ENCODE measurements at regions of chr9 and their contacts with region 1.

Region 1: GRCh38 chr9:18359335-18359734 is 114.6 kb upstream of the ADAMTSL1 start:
- DNase-seq: peak; percentile 92
- H3K4me3 ChIP-seq: peak overlapping the region in 1 of 3 experiments; percentile 59
- H3K27ac ChIP-seq: peak overlapping the region; percentile 100
- H3K4me1 ChIP-seq: peaks cover 31% of the 10 kb centered on the region
- H3K27me3 ChIP-seq: no peaks in the 10 kb centered on the region
- CTCF ChIP-seq: no peak
- POLR2A ChIP-seq: no peak

Region 2: GRCh38 chr9:18238254-18238653 is 121.1 kb before region 1 on chr9:
- CTCF ChIA-PET with region 1: no interaction called
- POLR2A ChIA-PET with region 1: no interaction called
- dilution Hi-C with region 1: no loop called
- intact Hi-C with region 1: loop called (anchors 1 kb)
- DNase-seq: peak; percentile 97
- H3K4me3 ChIP-seq: peak overlapping the region in 1 of 3 experiments; percentile 27
- H3K27ac ChIP-seq: peak overlapping the region; percentile 93
- H3K4me1 ChIP-seq: peaks cover 43% of the 10 kb centered on the region
- H3K27me3 ChIP-seq: no peaks in the 10 kb centered on the region
- CTCF ChIP-seq: no peak
- POLR2A ChIP-seq: no peak

Region 3: GRCh38 chr9:18274693-18275092 is 84.6 kb before region 1 on chr9:
- CTCF ChIA-PET with region 1: no interaction called
- POLR2A ChIA-PET with region 1: no interaction called
- dilution Hi-C with region 1: no loop called
- intact Hi-C with region 1: no loop called
- DNase-seq: peak; percentile 89
- H3K4me3 ChIP-seq: no peak overlapping the region
- H3K27ac ChIP-seq: peak overlapping the region; percentile 11
- H3K4me1 ChIP-seq: peaks cover 10% of the 10 kb centered on the region
- H3K27me3 ChIP-seq: no peaks in the 10 kb centered on the region
- CTCF ChIP-seq: no peak
- POLR2A ChIP-seq: no peak

Region 4: DNA sequence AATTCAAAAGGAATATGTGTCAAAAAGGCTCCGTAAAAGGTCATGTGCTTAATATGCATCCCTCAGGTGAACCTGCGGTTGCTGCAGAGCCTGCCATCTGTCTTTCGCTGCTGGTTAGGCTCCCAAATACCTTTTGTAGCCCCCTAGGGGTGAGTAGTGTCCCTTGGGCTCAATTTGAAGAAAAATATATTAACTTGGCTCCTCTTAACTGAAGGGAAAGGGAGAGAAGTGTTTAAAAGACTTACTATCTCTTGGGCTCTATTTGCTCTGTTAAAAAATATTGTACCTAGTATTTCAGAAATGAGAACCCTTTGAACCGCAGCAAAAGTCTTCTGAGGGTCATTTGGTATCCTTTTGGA is 61.8 kb before region 1 on chr9:
- CTCF ChIA-PET with region 1: no interaction called
- POLR2A ChIA-PET with region 1: no interaction called
- dilution Hi-C with region 1: no loop called
- intact Hi-C with region 1: no loop called
- DNase-seq: no peak
- H3K4me3 ChIP-seq: no peak overlapping the region
- H3K27ac ChIP-seq: peak overlapping the region; percentile 64
- H3K4me1 ChIP-seq: peaks cover 15% of the 10 kb centered on the region
- H3K27me3 ChIP-seq: no peaks in the 10 kb centered on the region
- CTCF ChIP-seq: peak; percentile 32 to 52
- POLR2A ChIP-seq: no peak